Activated CD4-positive, alpha-beta memory T cell treated with anti-CD3 and anti-CD28 coated beads, Interleukin-2, amount 10 ng/mL, durations not matched to agents 7 days and 5 days (primary cell): ENCODE measurements at regions of chr20 and their contacts with region 1.

Region 1: DNA sequence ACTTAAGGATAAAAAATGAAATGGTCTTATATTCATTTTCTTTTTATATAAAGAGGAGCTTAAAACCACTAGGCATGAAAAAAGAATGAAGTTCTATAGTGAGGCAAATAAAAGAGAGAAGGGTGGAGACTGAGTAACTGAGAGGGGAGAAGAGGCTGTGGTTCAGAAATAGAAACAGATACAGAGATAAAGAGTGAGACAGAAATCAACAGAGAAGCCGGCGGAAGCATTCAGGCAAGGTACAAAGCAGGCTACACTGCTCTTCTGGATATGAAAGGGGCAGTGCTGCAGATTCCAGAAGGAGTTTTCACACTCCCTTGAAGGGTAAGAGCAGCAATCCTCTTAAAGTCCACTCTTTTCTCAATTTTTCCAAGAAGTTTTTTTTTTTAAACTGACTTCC is 29.9 kb downstream of the NFATC2 start:
- DNase-seq: no peak
- H3K4me3 Mint-ChIP-seq: no peak overlapping the region
- H3K27ac Mint-ChIP-seq: peak overlapping the region; percentile 80
- H3K4me1 Mint-ChIP-seq: peaks cover 74% of the 10 kb centered on the region
- H3K27me3 Mint-ChIP-seq: no peaks in the 10 kb centered on the region

Region 2: DNA sequence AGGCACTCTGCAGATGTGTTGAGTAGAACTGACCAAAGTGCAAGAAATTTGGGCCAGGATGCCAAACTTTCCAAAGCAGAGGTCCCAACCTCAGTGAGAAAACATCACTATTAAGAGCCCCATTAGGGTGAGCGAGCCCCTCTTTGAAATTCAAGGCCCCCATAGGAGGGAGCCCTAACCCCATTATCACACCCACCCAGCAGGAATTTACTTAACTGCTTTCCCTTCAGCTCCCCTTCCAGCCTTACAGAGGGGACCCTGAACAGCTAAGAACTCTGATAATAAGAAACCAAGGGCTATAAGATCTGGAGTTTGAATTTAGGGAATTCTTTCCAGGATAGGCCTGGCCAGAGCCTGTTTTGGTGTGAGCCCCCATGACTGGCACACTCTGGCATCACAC is 100.8 kb before region 1 on chr20:
- CTCF ChIA-PET with region 1: no interaction called
- POLR2A ChIA-PET with region 1: no interaction called
- DNase-seq: no peak
- H3K4me3 Mint-ChIP-seq: no peak overlapping the region
- H3K27ac Mint-ChIP-seq: peak overlapping the region; percentile 81
- H3K4me1 Mint-ChIP-seq: peaks cover 91% of the 10 kb centered on the region
- H3K27me3 Mint-ChIP-seq: no peaks in the 10 kb centered on the region

Region 3: DNA sequence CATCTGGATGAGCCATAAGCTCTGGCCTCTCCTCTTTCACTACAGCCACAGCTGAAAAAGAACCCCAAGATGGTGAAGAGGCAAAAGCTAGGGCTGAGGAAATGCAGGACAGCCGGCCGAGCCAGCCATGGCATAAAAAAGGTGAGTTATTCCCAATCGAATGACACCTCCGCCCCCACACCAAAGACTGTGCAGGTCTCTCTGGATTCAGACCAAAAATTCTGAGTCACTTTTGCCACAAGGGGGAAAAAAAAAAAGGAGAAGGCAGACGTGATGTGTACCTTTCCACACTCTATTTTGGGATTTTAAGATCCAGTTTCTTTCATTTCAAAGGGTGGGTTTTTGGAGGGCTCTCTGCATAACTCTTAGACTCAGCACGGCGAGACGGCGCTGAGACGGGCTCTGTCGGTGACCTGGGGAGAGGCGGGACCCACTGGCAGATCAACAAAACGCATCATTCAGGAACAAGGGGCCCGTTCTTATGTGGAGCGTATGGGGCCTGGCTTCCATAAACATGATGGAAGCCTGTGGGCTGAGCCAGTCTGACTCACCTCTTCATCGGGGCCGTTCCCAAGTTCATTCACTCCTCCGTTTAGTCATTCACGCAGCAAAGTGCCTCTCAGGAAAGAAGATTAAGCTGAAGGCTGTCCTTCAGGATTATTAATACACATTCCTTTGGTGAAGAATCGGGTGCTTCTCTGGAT is 24.9 kb before region 1 on chr20:
- CTCF ChIA-PET with region 1: no interaction called
- POLR2A ChIA-PET with region 1: no interaction called
- DNase-seq: no peak
- H3K4me3 Mint-ChIP-seq: no peak overlapping the region
- H3K27ac Mint-ChIP-seq: no peak overlapping the region
- H3K4me1 Mint-ChIP-seq: peaks cover 73% of the 10 kb centered on the region
- H3K27me3 Mint-ChIP-seq: no peaks in the 10 kb centered on the region

Region 4: GRCh38 chr20:51525241-51526129 is 12.8 kb after region 1 on chr20:
- CTCF ChIA-PET with region 1: interaction called, 4 read pairs
- POLR2A ChIA-PET with region 1: interaction called, 32 read pairs
- DNase-seq: peak; percentile 55
- H3K4me3 Mint-ChIP-seq: peak overlapping the region; percentile 69
- H3K27ac Mint-ChIP-seq: peak overlapping the region; percentile 90
- H3K4me1 Mint-ChIP-seq: peaks cover 76% of the 10 kb centered on the region
- H3K27me3 Mint-ChIP-seq: no peaks in the 10 kb centered on the region

Region 5: GRCh38 chr20:51531141-51531710 is 18.6 kb after region 1 on chr20:
- CTCF ChIA-PET with region 1: interaction called, 4 read pairs
- POLR2A ChIA-PET with region 1: interaction called, 32 read pairs
- DNase-seq: peak; percentile 75
- H3K4me3 Mint-ChIP-seq: peak overlapping the region; percentile 61
- H3K27ac Mint-ChIP-seq: peak overlapping the region; percentile 91
- H3K4me1 Mint-ChIP-seq: peaks cover 96% of the 10 kb centered on the region
- H3K27me3 Mint-ChIP-seq: no peaks in the 10 kb centered on the region